MCF 10A (cell line): ENCODE measurements at regions of chrX and their contacts with region 1.

Region 1: GRCh38 chrX:154411322-154411980 is at the start of gene TAFAZZIN:
- DNase-seq: peak; percentile 55
- H3K4me3 Mint-ChIP-seq: peak within 1 kb of the TSS; percentile 83
- H3K27ac Mint-ChIP-seq: peak within 1 kb of the TSS; percentile 59
- H3K4me1 Mint-ChIP-seq: peaks cover 14% of the 10 kb centered on the region
- H3K27me3 Mint-ChIP-seq: peaks cover 19% of the 10 kb centered on the region
- CTCF ChIP-seq: no peak
- total RNA-seq, gene TAFAZZIN: 48.0 and 59.1 TPM in 2 replicates

Region 2: DNA sequence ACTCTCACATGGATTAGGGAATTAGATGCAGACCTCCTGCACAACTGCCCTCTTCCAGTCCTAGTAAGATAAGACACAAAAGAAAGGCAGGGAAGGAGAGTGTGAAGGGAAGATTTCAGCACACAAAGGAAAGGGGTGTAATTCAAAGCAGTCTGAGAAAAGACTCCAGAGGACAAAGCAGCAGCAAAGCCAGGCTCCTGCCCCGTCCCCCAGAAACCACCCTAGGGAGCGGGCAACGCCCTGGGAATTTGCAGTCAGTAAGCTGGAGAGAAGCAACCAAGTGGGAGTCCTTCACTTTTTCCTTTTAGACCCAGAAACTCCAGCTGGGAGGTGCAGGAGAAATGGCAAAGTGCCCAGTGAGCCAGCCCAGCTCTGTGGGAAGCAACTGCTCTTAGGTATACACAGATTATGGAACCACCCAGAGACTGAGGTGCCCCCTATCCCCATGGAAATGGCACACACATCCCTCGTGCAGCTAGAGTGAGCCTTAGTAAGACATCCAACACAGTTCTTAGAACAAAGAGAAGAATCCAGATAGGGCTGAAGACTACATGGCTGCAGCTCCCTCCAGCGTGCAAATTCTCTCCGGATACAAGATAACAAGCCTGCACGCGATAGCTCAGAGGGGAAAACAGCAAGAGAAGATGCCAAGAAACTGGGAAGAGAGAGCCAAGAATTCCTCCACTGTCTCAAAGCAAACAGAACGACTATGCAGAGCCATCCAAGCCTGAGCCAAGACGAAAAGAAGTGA is 365.2 kb before region 1 on chrX:
- CTCF ChIA-PET with region 1: no interaction called
- POLR2A ChIA-PET with region 1: no interaction called
- intact Hi-C with region 1: no loop called
- DNase-seq: peak; percentile 20
- H3K4me3 Mint-ChIP-seq: no peak overlapping the region
- H3K27ac Mint-ChIP-seq: no peak overlapping the region
- H3K4me1 Mint-ChIP-seq: peaks cover 6% of the 10 kb centered on the region
- H3K27me3 Mint-ChIP-seq: peaks cover 69% of the 10 kb centered on the region
- CTCF ChIP-seq: no peak

Region 3: DNA sequence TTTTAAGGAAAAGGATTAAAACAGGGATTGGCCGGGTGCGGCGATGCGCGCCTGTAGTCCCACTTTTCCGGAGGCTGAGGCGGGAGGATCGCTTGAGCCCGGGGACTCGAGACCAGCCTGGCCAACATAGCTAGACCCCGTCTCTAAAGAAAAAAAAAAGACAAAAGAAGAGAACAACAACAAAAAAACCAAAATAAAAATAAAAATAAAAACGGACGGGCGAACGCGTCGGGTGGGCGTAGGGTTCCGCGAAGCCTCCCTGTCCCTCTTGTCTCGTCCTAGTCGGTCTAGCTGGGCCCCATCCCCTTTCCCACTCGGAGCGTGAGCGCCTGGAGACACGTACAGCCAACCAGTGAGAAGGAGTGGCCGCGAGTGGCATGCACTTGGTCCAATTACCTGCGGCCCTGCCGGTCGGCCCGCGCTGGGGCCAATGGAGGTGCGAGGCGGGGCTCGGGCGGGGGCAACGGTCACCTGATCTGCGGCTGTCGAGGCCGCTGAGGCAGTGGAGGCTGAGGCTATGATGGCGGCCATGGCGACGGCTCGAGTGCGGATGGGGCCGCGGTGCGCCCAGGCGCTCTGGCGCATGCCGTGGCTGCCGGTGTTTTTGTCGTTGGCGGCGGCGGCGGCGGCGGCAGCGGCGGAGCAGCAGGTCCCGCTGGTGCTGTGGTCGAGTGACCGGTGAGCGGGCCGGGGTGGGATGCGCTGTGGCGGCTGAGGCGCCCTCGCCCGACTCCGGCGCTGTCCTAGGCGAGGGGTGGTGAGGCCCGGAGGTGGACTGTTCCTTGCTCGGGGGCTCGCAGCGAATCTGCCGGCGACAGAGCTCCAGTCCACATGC is 16.9 kb after region 1 on chrX and contains the start of gene ATP6AP1:
- CTCF ChIA-PET with region 1: no interaction called
- POLR2A ChIA-PET with region 1: interaction called, 31 read pairs
- intact Hi-C with region 1: no loop called
- DNase-seq: peak; percentile 89
- H3K4me3 Mint-ChIP-seq: peak within 1 kb of the TSS; percentile 74
- H3K27ac Mint-ChIP-seq: peak within 1 kb of the TSS; percentile 75
- H3K4me1 Mint-ChIP-seq: no peaks in the 10 kb centered on the region
- H3K27me3 Mint-ChIP-seq: peaks cover 15% of the 10 kb centered on the region
- CTCF ChIP-seq: no peak
- total RNA-seq, gene ATP6AP1: 48.7 and 57.0 TPM in 2 replicates

Region 4: DNA sequence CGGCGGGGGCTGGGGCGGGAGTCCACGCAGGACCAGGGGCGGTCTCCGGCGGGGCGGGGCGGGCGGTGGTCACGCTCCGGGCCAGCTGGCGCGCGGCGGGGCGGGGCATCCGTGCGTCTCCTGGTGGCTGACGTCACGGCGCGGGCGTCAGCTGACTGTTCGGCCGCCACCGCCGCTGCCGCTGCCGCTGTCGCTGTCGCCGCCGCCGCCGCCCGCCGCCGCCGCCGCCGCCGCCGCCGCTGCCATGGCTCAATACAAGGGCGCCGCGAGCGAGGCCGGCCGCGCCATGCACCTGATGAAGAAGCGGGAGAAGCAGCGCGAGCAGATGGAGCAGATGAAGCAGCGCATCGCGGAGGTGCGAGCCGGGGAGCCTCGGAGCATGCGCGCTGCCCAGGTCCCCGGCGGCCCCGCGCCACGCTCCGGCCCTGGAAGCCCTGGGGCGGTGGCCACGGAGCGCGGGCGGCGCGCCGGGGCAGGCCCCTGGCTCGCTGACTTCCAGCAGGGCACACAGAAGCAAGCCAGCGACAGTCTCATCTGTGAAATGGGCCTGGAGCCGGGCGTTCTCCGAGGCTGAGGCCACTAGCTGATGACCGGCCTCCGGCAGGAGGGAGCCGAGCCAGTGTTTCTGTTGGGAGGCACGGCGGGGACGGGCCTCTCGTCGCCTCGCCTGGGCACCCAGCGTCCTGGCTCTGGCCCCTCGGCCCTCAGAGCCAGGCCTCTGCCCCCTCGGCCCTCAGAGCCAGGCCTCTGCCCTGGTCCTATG is 32.7 kb after region 1 on chrX and contains the start of gene FAM50A:
- CTCF ChIA-PET with region 1: interaction called, 3 read pairs
- POLR2A ChIA-PET with region 1: interaction called, 5 read pairs
- intact Hi-C with region 1: loop called (anchors 5 kb)
- DNase-seq: peak; percentile 34
- H3K4me3 Mint-ChIP-seq: peak within 1 kb of the TSS; percentile 69
- H3K27ac Mint-ChIP-seq: peak within 1 kb of the TSS; percentile 78
- H3K4me1 Mint-ChIP-seq: no peaks in the 10 kb centered on the region
- H3K27me3 Mint-ChIP-seq: peaks cover 19% of the 10 kb centered on the region
- CTCF ChIP-seq: no peak
- total RNA-seq, gene FAM50A: 62.1 and 88.7 TPM in 2 replicates

Region 5: GRCh38 chrX:154710315-154710714 is 298.9 kb after region 1 on chrX:
- CTCF ChIA-PET with region 1: no interaction called
- POLR2A ChIA-PET with region 1: no interaction called
- intact Hi-C with region 1: no loop called
- DNase-seq: no peak
- H3K4me3 Mint-ChIP-seq: no peak overlapping the region
- H3K27ac Mint-ChIP-seq: no peak overlapping the region
- H3K4me1 Mint-ChIP-seq: peaks cover 23% of the 10 kb centered on the region
- H3K27me3 Mint-ChIP-seq: no peaks in the 10 kb centered on the region
- CTCF ChIP-seq: no peak

Region 6: DNA sequence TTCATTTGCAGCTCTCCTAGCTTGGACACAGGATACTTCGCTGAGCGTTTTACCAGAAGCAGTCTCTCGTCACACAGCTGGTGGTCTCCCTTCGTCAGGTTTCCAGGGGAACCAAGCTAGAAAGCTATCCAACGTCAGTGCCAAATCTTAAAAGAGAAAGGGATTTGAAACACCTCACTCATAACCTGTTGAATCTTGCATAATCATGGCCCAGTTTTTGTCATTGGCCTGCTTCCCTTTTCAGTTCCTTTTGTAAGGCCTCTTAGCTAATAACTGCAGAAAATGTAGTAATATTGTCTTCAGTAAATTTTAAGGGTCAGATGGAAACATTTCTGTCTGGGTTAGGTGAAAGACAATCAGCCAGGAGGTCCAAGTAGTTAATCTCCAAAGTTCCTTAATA is 830.8 kb after region 1 on chrX:
- CTCF ChIA-PET with region 1: no interaction called
- POLR2A ChIA-PET with region 1: no interaction called
- intact Hi-C with region 1: no loop called
- DNase-seq: peak; percentile 21
- H3K4me3 Mint-ChIP-seq: no peak overlapping the region
- H3K27ac Mint-ChIP-seq: no peak overlapping the region
- H3K4me1 Mint-ChIP-seq: no peaks in the 10 kb centered on the region
- H3K27me3 Mint-ChIP-seq: no peaks in the 10 kb centered on the region
- CTCF ChIP-seq: no peak